ENCODE measurements at regions of chr1 and their contacts with region 1.

Region 1: GRCh38 chr1:88891318-88891950 is at the start of gene GTF2B:
- DNase-seq: peak; percentile 88 to 97 (median 94)
- H3K4me3 ChIP-seq: peak within 1 kb of the TSS; percentile 81
- H3K4me3 Mint-ChIP-seq: peak within 1 kb of the TSS; percentile 94 to 99 (median 98)
- H3K27ac ChIP-seq: peak within 1 kb of the TSS; percentile 93
- H3K27ac Mint-ChIP-seq: peak within 1 kb of the TSS; percentile 89 to 99 (median 98)
- H3K4me1 ChIP-seq: peaks cover 36% of the 10 kb centered on the region
- H3K4me1 Mint-ChIP-seq: peaks cover 45 to 55% (median 50%) of the 10 kb centered on the region in 3 donors
- H3K27me3 ChIP-seq: no peaks in the 10 kb centered on the region
- H3K27me3 Mint-ChIP-seq: peaks cover 0 to 4% of the 10 kb centered on the region in 2 donors
- total RNA-seq, gene GTF2B: 39.9 to 40.7 TPM

Region 2: GRCh38 chr1:88683541-88684481 is 207.6 kb before region 1 on chr1 and contains the start of gene PKN2:
- CTCF ChIA-PET with region 1: no interaction called
- POLR2A ChIA-PET with region 1: interaction called, 16 read pairs
- DNase-seq: peak; percentile 95 to 98 (median 97)
- H3K4me3 ChIP-seq: peak within 1 kb of the TSS; percentile 69
- H3K4me3 Mint-ChIP-seq: peak within 1 kb of the TSS; percentile 91 to 100 (median 98)
- H3K27ac ChIP-seq: peak within 1 kb of the TSS; percentile 86
- H3K27ac Mint-ChIP-seq: peak within 1 kb of the TSS; percentile 95 to 99 (median 97)
- H3K4me1 ChIP-seq: peaks cover 27% of the 10 kb centered on the region
- H3K4me1 Mint-ChIP-seq: peaks cover 31 to 59% (median 47%) of the 10 kb centered on the region in 3 donors
- H3K27me3 ChIP-seq: no peaks in the 10 kb centered on the region
- H3K27me3 Mint-ChIP-seq: no peaks in the 10 kb centered on the region
- total RNA-seq, gene PKN2: 14.8 to 17.8 TPM

Region 3: GRCh38 chr1:88867743-88868521 is 23.5 kb before region 1 on chr1:
- CTCF ChIA-PET with region 1: no interaction called
- POLR2A ChIA-PET with region 1: no interaction called
- DNase-seq: no peak
- H3K4me3 ChIP-seq: no peak overlapping the region
- H3K4me3 Mint-ChIP-seq: peak overlapping the region in 5 of 7 donors; percentile 11 to 47 (median 28)
- H3K27ac ChIP-seq: no peak overlapping the region
- H3K27ac Mint-ChIP-seq: peak overlapping the region in 5 of 8 donors; percentile 0 to 82 (median 24)
- H3K4me1 ChIP-seq: peaks cover 16% of the 10 kb centered on the region
- H3K4me1 Mint-ChIP-seq: peaks cover 47 to 74% (median 61%) of the 10 kb centered on the region in 3 donors
- H3K27me3 ChIP-seq: no peaks in the 10 kb centered on the region
- H3K27me3 Mint-ChIP-seq: no peaks in the 10 kb centered on the region

Region 4: DNA sequence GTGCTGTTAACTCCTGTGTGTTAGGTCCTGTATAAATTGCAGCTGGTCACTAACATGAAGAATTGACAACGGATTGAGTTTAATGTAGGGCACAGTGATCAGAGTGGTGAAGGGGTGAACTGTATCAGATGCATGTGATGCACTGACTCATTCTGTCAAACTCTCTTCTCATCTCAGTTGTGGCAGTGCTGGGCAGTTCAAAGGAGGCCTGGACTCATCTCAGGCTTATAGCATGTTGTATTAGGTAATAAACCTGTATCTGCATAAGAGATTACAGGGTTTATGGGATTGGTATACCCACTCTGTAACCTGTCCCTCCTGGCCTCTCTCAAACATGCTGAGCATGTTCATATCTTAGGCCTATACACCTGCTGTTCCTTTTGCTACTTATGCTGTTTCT is 143.6 kb after region 1 on chr1:
- CTCF ChIA-PET with region 1: no interaction called
- POLR2A ChIA-PET with region 1: no interaction called
- DNase-seq: no peak
- H3K4me3 ChIP-seq: no peak overlapping the region
- H3K4me3 Mint-ChIP-seq: peak overlapping the region in 1 of 7 donors; percentile 4
- H3K27ac ChIP-seq: no peak overlapping the region
- H3K27ac Mint-ChIP-seq: peak overlapping the region in 7 of 8 donors; percentile 7 to 83 (median 64)
- H3K4me1 ChIP-seq: peaks cover 17% of the 10 kb centered on the region
- H3K4me1 Mint-ChIP-seq: peaks cover 51 to 69% (median 64%) of the 10 kb centered on the region in 3 donors
- H3K27me3 ChIP-seq: no peaks in the 10 kb centered on the region
- H3K27me3 Mint-ChIP-seq: no peaks in the 10 kb centered on the region

Region 5: DNA sequence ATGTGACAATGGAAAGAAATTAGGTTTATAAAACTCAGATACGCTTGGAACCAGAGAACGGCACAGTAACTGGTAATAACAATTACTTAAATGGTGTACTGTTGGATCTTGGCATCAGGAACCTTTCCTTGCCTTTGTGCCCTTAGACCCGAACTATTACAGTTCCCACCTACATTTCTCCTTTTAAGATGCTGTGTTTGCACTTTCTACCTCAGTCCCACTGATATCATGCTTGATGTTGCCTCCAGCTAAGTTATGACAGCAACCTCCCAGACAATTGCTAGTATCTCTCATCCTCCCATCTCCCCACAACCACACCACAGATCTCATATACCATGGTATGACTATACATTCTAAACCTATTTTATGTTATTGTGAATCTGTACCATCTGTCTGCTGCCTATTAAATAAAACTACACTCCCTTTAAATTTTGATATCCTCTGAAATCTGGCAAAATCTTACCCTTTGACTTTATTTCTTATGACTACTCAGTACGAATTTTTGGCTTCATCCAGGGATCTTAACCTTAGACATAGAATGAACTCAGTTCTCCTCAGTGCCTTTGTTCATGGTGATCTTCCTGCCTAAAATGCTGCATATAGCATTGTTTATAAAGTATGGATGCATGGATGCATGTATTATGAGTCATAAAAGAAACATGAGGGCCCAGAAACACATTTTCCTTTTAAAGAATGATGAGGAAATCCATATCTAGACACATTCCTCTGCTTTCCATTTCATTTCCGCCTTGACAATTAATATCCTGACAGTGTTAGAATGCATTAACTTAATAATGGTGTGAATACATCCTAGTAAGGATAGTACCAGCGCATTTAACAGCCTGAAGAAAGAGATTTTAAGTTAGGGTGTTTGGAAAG is 993.5 kb after region 1 on chr1:
- CTCF ChIA-PET with region 1: no interaction called
- POLR2A ChIA-PET with region 1: no interaction called
- DNase-seq: no peak
- H3K4me3 ChIP-seq: no peak overlapping the region
- H3K4me3 Mint-ChIP-seq: no peak overlapping the region
- H3K27ac ChIP-seq: no peak overlapping the region
- H3K27ac Mint-ChIP-seq: peak overlapping the region in 2 of 8 donors; percentile 33 to 42
- H3K4me1 ChIP-seq: no peaks in the 10 kb centered on the region
- H3K4me1 Mint-ChIP-seq: peaks cover 23 to 38% (median 25%) of the 10 kb centered on the region in 3 donors
- H3K27me3 ChIP-seq: no peaks in the 10 kb centered on the region
- H3K27me3 Mint-ChIP-seq: no peaks in the 10 kb centered on the region